ENCODE measurements at regions of chr15 and their contacts with region 1.

Region 1: DNA sequence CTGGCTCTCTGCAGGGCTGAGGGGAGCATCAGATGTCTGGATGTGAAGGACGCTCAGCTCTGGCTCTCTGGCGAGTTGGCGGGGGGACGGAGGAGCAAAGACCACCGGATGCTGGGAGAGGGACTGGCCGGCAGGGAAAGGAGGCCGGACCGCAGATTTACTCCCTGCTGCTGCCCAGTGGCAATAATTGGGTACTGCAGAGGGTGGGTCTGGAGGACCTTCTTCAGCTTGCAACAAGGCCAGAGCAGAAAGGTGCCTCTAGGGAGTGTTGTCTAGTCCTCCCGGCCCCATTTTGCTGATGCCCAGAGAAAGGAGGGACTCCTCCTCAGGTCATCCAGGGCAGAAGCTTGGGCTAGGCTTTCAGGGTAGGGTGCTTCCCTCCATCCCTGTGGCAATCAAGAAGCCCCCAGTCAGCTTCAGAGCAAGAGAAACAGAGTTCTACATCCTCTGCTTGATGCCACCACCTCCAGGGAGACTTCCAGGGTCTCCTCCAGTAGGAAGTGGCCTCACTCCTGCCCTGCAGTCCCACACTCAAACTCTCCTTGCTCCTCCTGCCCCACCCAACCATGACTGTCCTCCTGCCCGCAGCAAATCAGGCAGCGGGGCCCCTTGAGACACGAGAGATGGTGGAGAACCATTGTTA is 20.3 kb upstream of the CSPG4 start:
- DNase-seq: peak; percentile 73
- ATAC-seq: peak; percentile 74

Region 2: DNA sequence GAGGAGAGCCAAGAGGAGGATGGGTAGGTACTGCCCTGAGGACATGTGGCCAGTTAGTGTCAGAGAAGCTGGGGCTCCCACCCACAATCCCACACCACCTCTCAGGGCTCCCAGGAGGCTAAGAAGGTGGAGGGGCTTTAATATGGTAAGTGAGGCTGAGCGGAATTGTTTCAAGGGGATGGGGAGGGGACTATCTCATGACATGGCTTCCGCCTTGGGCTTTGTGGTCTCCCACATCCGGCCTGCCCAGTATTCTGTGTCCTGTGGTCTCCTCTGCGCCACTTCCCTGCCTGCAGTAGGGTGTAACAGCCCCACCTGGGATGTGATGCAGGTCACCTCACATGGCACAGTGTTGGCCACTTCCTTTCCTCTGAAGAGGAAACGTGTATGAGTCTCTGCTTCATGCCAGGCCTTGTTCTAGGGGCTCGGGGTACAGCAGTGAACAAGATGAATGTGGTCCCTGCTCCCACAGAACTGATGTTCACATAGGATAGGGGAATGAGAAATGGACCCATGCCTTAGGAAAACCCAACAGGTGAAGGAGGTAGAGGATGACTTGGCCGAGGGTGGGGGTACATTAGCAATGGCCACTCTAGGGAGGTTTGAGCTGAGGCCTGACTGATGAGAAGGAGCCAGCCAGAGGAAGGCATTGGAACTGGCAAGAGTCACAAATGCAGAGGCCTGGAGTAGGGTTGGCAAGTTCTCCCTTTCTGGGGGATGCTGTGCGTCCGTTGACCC is 382.9 kb before region 1 on chr15:
- intact Hi-C with region 1: no loop called
- DNase-seq: peak; percentile 59
- ATAC-seq: no peak

Region 3: GRCh38 chr15:75675579-75676404 is 57.1 kb before region 1 on chr15:
- intact Hi-C with region 1: no loop called
- DNase-seq: peak; percentile 65
- ATAC-seq: peak; percentile 18

Region 4: DNA sequence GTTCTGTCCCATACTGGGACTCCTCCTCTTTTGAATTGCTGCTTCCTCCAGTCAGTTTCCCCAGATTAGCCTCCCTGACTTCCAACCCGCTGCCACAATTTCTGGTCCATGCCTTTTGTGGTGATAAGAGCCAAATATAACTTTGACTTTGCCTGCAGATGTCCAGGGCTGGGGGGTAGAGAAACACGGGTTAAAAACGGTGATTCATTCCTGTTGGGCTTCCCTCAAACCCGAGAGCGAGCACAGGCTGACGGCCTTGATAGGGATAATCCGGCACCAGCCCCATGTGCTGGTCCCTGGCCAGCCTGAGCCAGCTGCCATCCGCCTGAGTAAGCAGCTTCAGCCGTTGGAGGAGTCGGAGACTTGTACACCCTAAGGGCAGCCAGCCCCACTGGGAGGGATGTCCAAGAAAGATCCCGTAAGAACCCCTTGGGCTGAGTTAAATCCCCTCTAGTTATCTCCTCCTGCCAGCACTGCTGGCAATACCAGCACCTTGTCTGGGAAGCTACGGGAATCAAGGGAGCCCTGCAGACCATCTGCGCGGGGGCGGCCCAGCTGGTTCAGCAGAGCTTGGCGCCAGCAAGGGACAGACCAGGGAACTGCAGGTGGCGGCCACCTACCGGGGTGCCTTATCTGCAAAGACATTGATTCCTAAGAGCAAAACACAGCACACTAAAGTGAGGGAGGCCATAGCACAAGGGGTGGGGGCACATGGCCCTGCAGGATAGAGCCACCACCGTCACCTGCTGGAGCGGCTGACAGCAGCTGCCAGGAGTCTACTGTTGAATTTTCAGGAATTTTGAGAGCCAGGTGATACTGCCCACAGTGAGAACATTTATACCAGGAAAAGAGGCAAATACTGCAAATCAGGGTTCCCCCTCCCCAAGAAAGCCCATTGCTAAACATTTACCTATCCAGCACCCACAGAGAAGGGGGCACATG is 38.4 kb before region 1 on chr15:
- intact Hi-C with region 1: loop called (anchors 5 kb)
- DNase-seq: peak; percentile 89
- ATAC-seq: peak; percentile 88

Region 5: DNA sequence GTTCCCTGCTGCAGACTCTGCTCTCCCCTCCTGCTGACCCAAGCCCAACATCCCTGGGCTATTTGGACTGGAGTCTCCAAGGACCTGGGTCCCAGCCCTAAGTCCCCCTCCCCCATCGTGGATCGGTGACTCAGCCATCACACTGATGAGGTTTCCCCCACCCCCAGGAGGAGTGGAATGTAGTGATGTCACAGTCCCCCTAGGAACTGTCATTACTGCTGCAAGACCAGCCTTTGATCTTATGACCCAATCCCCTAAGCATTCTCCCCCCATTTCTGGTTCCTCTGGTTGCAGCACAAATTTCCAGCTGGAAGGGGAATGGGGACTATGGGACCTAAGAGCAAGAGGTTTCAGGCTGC is 43.1 kb after region 1 on chr15:
- intact Hi-C with region 1: no loop called
- DNase-seq: no peak
- ATAC-seq: no peak

Region 6: DNA sequence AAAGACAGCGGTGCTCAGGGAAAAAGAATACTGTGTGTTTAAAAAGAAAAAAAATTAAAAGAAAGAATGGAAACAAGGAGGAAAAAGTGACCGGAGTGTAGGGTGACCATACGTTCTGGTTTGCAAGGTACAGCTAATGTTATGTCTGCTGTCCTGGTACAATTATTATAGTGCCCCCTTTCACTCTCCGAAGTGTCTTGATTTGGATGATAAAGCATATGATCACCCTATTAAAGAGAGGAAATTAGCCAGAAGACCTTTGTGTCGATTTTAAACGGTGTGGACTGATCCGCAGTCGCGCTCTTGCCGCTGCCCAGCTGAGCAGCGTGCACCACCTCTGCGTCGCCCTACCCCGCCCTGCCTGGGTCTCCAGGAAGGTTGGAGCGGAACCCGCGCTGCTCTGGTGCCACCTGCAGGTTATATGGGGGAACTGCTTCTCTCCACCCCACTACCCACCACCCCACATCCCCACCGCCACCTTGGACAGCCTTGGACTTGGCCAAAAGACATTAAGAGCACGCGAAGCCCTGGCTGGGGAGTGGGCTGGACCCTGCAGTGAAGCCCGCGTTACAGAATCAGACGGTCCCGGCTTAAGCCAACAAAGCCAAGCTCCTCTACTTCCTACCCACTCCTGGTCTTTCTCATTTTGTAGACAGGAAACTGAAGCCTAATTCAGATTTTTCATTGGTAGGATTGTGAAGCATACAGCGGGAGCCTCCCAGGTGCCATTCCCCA is 69.1 kb after region 1 on chr15:
- intact Hi-C with region 1: loop called (anchors 5 kb)
- DNase-seq: peak; percentile 87
- ATAC-seq: peak; percentile 99

Region 7: GRCh38 chr15:75817138-75817935 is 84.4 kb after region 1 on chr15:
- intact Hi-C with region 1: no loop called
- DNase-seq: no peak
- ATAC-seq: no peak